T-cell (primary cell): ENCODE measurements at regions of chr5 and their contacts with region 1.

Region 1: GRCh38 chr5:138536665-138537315 is 6.2 kb downstream of the ETF1 start:
- DNase-seq: peak in 7 of 35 experiments; percentile 8 to 47 (median 12)
- ATAC-seq: peak in 3 of 4 experiments; percentile 36 to 74 (median 52)
- H3K4me3 ChIP-seq: no peak overlapping the region
- H3K4me3 Mint-ChIP-seq: no peak overlapping the region
- H3K27ac ChIP-seq: no peak overlapping the region
- H3K27ac Mint-ChIP-seq: peak overlapping the region; percentile 13 to 77
- H3K4me1 ChIP-seq: peaks cover 6 to 24% of the 10 kb centered on the region in 2 experiments
- H3K4me1 Mint-ChIP-seq: peaks cover 72 to 77% (median 75%) of the 10 kb centered on the region in 3 donors
- H3K27me3 ChIP-seq: no peaks in the 10 kb centered on the region
- H3K27me3 Mint-ChIP-seq: no peaks in the 10 kb centered on the region

Region 2: DNA sequence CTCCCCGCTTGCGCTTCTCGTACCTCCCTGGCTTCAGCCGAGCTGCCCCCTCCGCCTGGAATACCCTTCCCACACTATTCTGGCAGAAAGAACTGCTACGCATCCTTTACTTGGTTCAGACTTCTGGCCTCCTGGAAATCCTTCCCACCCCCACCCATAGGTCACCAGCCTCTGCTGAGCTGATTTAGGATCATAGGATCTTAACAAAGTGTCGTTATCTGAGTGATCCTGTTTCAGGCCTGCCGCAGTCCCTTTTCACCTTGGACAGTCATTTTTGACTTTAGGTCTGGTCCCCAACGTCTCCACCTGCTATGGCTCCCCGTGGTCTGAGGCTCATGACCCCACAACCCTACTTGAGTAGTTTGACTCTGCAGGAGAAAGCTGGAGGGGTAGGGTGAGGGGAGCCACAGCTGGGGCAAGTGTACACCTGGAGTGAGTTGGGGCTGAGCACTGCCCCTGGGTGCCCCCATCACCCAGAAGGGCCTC is 44.2 kb before region 1 on chr5:
- CTCF ChIA-PET with region 1: no interaction called
- POLR2A ChIA-PET with region 1: interaction called in 1 of 2 experiments, 11 read pairs
- DNase-seq: peak in 1 of 35 experiments; percentile 13
- ATAC-seq: no peak
- H3K4me3 ChIP-seq: peak overlapping the region; percentile 52 to 53
- H3K4me3 Mint-ChIP-seq: peak overlapping the region; percentile 85 to 86 (median 86)
- H3K27ac ChIP-seq: no peak overlapping the region
- H3K27ac Mint-ChIP-seq: no peak overlapping the region
- H3K4me1 ChIP-seq: peaks cover 6 to 22% of the 10 kb centered on the region in 2 experiments
- H3K4me1 Mint-ChIP-seq: peaks cover 9 to 19% (median 16%) of the 10 kb centered on the region in 3 donors
- H3K27me3 ChIP-seq: peaks cover 0 to 47% of the 10 kb centered on the region in 2 experiments
- H3K27me3 Mint-ChIP-seq: peaks cover 5 to 20% of the 10 kb centered on the region in 2 donors